A549 (cell line): ENCODE measurements at regions of chr10 and their contacts with region 1.

Region 1: DNA sequence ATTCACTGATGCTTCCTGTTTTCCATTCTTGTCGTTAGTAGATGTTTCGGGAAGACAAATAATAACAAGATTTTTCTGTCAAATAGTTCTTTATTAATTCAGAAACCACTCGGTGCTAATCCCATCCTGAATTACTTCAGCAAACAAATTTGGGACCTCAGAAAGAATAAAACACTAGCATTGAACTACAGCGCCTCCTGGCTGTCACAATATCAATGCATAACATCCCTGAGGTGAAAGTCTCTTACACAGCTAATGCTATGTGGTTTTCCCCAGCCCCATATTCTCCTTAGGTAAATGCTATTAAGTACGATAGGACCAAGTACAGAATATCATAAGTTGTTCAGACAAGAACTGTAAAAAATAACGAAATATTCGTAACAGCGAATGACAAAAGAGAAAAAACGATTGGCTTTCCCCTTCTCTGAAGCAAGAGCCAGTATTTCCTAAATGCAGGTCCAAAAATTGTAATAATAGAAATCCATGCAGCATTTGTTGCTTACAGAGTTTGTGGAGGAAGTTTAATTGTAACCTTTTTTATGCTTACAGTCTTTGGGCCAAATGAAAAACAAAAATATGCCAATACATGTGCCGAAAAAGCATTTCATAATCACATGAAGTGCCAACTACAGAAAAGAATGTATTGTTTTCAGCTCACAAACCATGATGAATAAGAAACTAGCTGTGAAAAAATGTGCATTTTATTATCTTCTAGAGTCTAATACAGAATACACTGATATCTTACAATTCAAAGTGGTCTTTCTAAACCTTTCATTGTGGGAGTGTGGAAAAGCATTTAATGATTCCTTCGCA is 47.3 kb downstream of the MYPN start:
- DNase-seq: peak; percentile 35 to 77
- ATAC-seq: peak in 1 of 2 experiments; percentile 10; a peak in 1 of 6 replicates
- H3K4me3 ChIP-seq: no peak overlapping the region
- H3K27ac ChIP-seq: peak overlapping the region; percentile 86 to 92
- H3K4me1 ChIP-seq: peaks cover 57% of the 10 kb centered on the region
- CTCF ChIP-seq: peak; percentile 91
- EP300 ChIP-seq: no peak
- POLR2A ChIP-seq: no peak
- RAD21 ChIP-seq: peak; percentile 90 to 95

Region 2: DNA sequence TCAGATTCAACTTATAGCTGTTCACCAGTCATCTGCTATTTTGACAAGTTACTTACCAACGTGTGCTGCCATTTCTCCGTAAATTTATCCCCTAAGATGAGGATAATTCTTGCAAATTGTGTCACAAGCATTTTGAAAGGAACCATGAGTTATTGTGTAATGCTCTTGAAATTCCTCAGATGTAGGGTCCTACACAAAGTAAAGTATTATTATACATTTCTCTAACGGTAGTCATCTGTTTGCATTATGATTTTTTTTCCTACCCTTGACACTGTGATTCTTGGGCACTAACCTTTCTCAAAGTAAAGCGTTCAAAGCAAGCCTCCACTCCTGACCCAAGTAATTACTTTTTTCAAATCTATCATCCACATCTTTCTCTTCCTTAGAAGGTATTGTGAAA is 89.5 kb before region 1 on chr10:
- CTCF ChIA-PET with region 1: interaction called, 13 read pairs
- POLR2A ChIA-PET with region 1: no interaction called
- DNase-seq: no peak
- ATAC-seq: peak in 1 of 2 experiments; percentile 8; a peak in 2 of 6 replicates
- H3K4me3 ChIP-seq: no peak overlapping the region
- H3K27ac ChIP-seq: no peak overlapping the region
- H3K4me1 ChIP-seq: peaks cover 48% of the 10 kb centered on the region
- CTCF ChIP-seq: no peak
- EP300 ChIP-seq: no peak
- POLR2A ChIP-seq: no peak
- RAD21 ChIP-seq: no peak

Region 3: DNA sequence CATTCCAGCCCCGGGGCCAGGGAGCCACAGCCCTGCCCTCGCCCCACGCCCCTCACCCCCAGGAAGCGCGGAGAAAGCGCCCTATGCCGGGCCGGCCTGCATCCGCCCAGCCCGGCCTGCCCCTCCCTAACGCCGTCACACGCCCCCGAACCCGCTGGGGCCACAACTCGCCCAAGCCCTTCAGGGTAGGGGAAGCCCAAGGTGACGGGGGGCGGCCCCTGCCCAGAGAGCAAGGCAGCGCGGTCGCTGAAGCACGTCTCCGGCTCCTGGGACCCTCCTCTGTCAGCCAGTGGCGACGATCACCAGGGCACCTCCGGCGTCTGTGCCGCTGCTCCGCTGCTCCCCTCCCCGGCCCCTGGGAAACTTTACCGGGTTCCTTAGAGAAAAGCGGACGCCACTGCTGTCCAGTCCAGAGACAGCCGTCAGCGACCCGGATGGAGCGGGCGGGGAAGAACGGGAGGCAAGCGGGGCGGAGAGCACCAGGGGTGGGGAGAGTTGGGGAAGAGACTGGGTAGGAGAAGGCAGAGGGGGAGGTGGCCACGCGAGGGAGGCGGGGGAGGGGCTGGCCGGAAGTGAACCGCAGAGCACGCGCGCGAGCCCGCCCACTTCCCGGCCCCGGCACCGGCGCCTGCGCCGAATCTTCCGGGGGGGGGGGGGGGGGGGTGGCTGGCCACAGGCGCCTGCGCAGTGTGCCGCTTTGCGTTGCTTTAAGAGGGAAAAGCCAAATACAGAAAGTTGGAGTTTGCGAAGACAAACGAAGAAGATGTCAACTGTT is 81.6 kb before region 1 on chr10 and contains the start of gene HERC4:
- CTCF ChIA-PET with region 1: interaction called, 25 read pairs
- POLR2A ChIA-PET with region 1: no interaction called
- DNase-seq: peak; percentile 87 to 94
- ATAC-seq: peak; percentile 96 to 97
- H3K4me3 ChIP-seq: peak within 1 kb of the TSS; percentile 97
- H3K27ac ChIP-seq: peak within 1 kb of the TSS; percentile 98 to 99
- H3K4me1 ChIP-seq: peaks cover 31% of the 10 kb centered on the region
- CTCF ChIP-seq: no peak
- EP300 ChIP-seq: no peak
- POLR2A ChIP-seq: peak; percentile 57
- RAD21 ChIP-seq: no peak
- polyA plus RNA-seq, gene HERC4: 40.5 and 51.3 TPM in 2 replicates

Region 4: GRCh38 chr10:68082872-68083271 is 73.7 kb before region 1 on chr10:
- CTCF ChIA-PET with region 1: interaction called, 241 read pairs
- POLR2A ChIA-PET with region 1: no interaction called
- DNase-seq: peak in 1 of 2 experiments; percentile 61
- ATAC-seq: peak; percentile 31 to 66; a peak in 2 of 6 replicates
- H3K4me3 ChIP-seq: no peak overlapping the region
- H3K27ac ChIP-seq: peak overlapping the region; percentile 92 to 93; a peak in 5 of 6 replicates
- H3K4me1 ChIP-seq: peaks cover 55% of the 10 kb centered on the region
- CTCF ChIP-seq: peak; percentile 88
- EP300 ChIP-seq: no peak
- POLR2A ChIP-seq: no peak
- RAD21 ChIP-seq: peak; percentile 91 to 94

Region 5: GRCh38 chr10:68105820-68106219 is 50.8 kb before region 1 on chr10:
- CTCF ChIA-PET with region 1: interaction called, 15 read pairs
- POLR2A ChIA-PET with region 1: no interaction called
- DNase-seq: no peak
- ATAC-seq: peak in 1 of 2 experiments; percentile 60; a peak in 3 of 6 replicates
- H3K4me3 ChIP-seq: no peak overlapping the region
- H3K27ac ChIP-seq: peak overlapping the region; percentile 62 to 88
- H3K4me1 ChIP-seq: peaks cover 69% of the 10 kb centered on the region
- CTCF ChIP-seq: no peak
- EP300 ChIP-seq: no peak
- POLR2A ChIP-seq: no peak
- RAD21 ChIP-seq: no peak

Region 6: DNA sequence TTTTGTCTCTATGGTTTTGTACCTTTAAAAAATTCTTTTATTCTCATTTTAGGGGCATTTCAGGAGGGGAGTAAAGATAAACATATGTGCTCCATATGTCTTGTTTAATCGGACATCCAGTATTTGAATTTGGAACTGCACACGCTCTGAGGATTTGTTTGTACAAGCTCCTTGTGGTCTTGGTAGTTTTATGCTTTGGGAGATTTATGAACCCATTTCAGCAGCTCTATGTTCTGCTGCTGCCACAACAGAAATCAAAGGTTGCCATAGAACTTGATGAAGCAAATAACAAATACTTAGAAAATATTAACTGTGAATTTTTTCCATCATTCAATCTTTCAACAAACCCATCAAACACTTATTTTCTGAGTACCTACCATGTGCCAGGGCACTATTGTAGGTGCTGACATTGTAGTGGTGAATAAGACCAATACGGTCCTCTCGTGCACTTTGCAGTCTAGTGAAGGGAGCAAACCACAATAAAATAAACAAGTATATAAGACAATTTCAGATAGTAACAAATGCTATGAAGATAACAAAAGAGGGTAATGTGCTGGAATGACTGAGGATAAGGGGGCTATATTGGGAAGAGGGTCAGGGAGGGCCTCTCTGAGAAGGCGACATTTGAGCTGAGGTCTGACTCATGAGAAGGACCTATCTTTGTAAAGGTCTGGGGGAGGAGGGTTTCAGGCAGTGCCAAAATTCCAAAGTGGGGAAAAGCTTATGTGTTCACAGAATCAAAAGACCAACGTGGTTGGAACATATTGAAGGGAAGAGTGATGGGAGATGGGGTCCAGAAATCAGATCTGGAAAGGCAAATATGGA is 16.9 kb before region 1 on chr10:
- CTCF ChIA-PET with region 1: interaction called, 10 read pairs
- POLR2A ChIA-PET with region 1: no interaction called
- DNase-seq: no peak
- ATAC-seq: no peak
- H3K4me3 ChIP-seq: no peak overlapping the region
- H3K27ac ChIP-seq: peak overlapping the region in 1 of 2 experiments; percentile 59; a peak in 3 of 6 replicates
- H3K4me1 ChIP-seq: peaks cover 46% of the 10 kb centered on the region
- CTCF ChIP-seq: no peak
- EP300 ChIP-seq: no peak
- POLR2A ChIP-seq: no peak
- RAD21 ChIP-seq: no peak

Region 7: DNA sequence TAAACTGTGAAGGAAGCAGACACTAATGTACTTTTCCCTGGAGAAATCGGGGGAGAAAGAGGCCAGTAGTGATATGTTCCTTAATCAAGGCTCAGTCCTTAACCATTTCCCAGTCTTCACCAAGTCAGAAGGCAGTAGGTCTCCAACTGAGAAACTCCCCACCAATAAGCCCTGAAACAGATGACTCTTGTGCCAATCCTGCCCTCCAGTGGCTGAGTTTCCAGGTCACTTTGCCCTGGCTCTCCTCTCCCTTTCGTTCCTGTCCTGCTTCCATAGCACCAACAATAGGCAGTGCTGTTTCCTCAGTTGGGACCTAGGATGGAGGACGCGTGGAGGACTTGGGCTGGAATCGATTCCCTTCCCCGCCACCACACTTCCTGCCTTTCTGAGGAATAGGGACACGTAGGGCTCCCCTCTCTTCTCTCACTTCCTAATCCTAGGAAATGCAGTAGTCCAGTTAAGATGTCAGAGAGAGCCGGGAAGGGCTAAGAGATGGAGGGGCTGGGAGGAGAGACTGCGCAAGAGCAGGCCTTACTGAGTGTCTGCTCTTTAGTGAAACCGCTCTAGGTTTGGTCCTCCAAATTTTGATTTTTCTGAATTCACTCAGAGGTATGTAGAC is 52.0 kb after region 1 on chr10:
- CTCF ChIA-PET with region 1: interaction called, 31 read pairs
- POLR2A ChIA-PET with region 1: no interaction called
- DNase-seq: peak; percentile 78 to 90
- ATAC-seq: peak; percentile 96 to 99
- H3K4me3 ChIP-seq: no peak overlapping the region
- H3K27ac ChIP-seq: peak overlapping the region; percentile 26 to 76; a peak in 5 of 6 replicates
- H3K4me1 ChIP-seq: peaks cover 11% of the 10 kb centered on the region; the same call in 2 of the 3 replicates
- CTCF ChIP-seq: peak; percentile 92
- EP300 ChIP-seq: no peak
- POLR2A ChIP-seq: no peak
- RAD21 ChIP-seq: peak; percentile 97 to 99

Region 8: GRCh38 chr10:69222157-69223027 is 1065.8 kb after region 1 on chr10:
- CTCF ChIA-PET with region 1: no interaction called
- POLR2A ChIA-PET with region 1: no interaction called
- DNase-seq: peak; percentile 66 to 73
- ATAC-seq: peak; percentile 72 to 78
- H3K4me3 ChIP-seq: peak overlapping the region; percentile 55; the same call in 2 of the 3 replicates
- H3K27ac ChIP-seq: peak overlapping the region; percentile 81 to 91
- H3K4me1 ChIP-seq: peaks cover 62% of the 10 kb centered on the region
- CTCF ChIP-seq: peak; percentile 75
- EP300 ChIP-seq: no peak
- POLR2A ChIP-seq: no peak
- RAD21 ChIP-seq: peak; percentile 41 to 48; a peak in 4 of 5 replicates